Stomach (tissue), 19 donors: ENCODE measurements at regions of chr10 and their contacts with region 1.

Region 1: DNA sequence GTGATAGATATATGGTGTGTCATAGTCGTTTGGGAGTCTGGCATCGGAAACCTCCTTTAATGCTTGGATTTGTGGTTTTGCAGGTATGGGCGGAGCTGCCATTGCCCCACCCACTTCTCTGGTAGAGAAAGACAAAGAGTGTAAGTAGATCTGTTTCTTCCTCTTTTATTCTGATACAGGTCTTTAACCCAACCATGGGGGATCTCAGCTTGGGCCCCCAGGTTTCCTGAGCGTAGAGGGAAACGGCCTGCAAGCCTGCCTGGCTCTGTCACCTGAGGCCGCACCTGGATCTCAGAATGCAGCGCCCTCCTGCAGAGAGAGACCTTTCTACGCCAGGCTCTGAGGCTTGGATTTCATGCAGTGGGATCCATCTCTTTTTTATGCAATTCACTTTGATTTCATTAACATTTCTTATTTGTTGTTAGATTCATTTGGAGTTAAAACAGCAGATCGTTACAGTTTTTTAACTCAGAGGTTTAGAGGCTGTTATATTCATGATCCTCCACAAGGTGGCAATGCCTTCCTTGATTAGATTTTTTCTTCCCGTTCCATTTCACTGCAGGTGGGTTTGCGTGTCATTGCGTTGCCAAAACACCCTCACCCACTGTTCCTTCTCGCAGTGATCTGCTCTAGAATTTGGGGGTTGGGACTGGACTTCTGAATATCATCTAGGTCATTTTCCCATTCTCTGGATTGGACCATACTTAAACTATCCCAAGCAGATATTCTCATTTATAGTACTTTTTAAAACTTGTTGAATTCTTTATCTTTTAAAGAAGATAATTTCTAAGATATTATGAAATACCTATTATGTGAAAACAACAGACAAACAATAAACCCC is 20.0 kb downstream of the RBM17 start:
- DNase-seq: peak in 1 of 2 donors; percentile 72
- H3K4me3 ChIP-seq: no peak overlapping the region
- H3K27ac ChIP-seq: no peak overlapping the region
- H3K4me1 ChIP-seq: peaks cover 0 to 14% (median 8%) of the 10 kb centered on the region in 4 donors
- H3K27me3 ChIP-seq: no peaks in the 10 kb centered on the region
- CTCF ChIP-seq: peak in 5 of 7 experiments; percentile 50 to 83 (median 65)
- EP300 ChIP-seq: no peak
- POLR2A ChIP-seq: no peak

Region 2: GRCh38 chr10:6128591-6129251 is 19.9 kb after region 1 on chr10:
- intact Hi-C with region 1: no loop called
- DNase-seq: peak in 1 of 2 donors; percentile 55
- H3K4me3 ChIP-seq: no peak overlapping the region
- H3K27ac ChIP-seq: no peak overlapping the region
- H3K4me1 ChIP-seq: peaks cover 0 to 35% (median 12%) of the 10 kb centered on the region in 4 donors
- H3K27me3 ChIP-seq: peaks cover 0 to 27% (median 0%) of the 10 kb centered on the region in 3 donors
- CTCF ChIP-seq: no peak
- EP300 ChIP-seq: no peak
- POLR2A ChIP-seq: no peak

Region 3: DNA sequence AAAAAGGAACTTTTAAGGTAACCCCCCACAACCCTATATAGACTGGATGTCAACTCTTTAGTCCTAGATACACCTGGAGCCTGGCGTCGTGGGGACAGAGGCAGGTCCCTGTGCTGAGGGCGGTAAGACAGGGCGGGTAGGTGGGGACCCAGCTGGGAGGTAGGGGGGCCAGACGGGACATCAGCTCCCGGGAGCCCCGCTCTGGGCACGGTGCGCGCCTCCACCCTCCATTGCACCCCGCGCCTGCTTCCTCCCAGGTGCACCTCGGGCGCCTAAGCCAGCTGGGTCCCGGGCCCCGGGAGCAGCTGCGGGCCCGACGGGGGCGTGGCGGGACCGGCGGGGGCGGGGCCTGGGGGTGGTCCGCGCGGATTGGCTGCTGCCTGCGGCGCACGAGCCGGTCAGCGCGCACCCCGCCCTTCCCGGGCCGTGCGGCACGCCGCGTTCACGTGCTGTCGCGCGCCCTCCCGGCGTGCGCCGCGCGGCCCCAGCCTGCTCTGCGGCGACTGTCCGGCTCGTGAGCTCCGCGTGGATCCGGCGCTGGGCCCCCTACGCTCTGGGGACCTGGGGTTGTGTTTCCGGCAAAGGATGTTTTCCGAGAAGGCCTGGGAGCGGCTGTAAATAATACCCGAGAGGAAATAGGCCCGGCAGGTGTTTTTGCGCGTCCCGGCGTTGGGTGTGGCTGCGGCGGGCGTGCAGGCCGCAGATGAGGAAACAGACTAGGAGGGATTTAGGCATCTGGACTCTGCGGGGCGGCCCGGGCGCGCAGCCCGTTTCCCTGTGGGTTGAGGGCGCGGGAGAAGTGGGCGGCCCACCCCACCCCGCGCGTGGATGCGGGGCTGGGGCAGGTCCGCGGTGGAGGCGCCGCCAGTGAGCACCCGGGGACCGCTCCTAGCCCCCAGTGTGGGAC is 54.8 kb after region 1 on chr10:
- intact Hi-C with region 1: no loop called
- DNase-seq: peak; percentile 91 to 98
- H3K4me3 ChIP-seq: peak overlapping the region; percentile 68 to 74 (median 72)
- H3K27ac ChIP-seq: peak overlapping the region; percentile 93 to 98 (median 95)
- H3K4me1 ChIP-seq: peaks cover 28 to 56% (median 34%) of the 10 kb centered on the region in 4 donors
- H3K27me3 ChIP-seq: no peaks in the 10 kb centered on the region
- CTCF ChIP-seq: no peak
- EP300 ChIP-seq: no peak
- POLR2A ChIP-seq: peak in 1 of 4 donors; percentile 8

Region 4: GRCh38 chr10:6211671-6212635 is 103.1 kb after region 1 on chr10:
- intact Hi-C with region 1: loop called (anchors 10 kb)
- DNase-seq: peak in 1 of 2 donors; percentile 76
- H3K4me3 ChIP-seq: no peak overlapping the region
- H3K27ac ChIP-seq: peak overlapping the region in 4 of 5 donors; percentile 52 to 75 (median 66)
- H3K4me1 ChIP-seq: peaks cover 9 to 47% (median 23%) of the 10 kb centered on the region in 4 donors
- H3K27me3 ChIP-seq: no peaks in the 10 kb centered on the region
- CTCF ChIP-seq: no peak
- EP300 ChIP-seq: no peak
- POLR2A ChIP-seq: no peak